SK-N-SH (cell line): ENCODE measurements at regions of chr5 and their contacts with region 1.

Region 1: DNA sequence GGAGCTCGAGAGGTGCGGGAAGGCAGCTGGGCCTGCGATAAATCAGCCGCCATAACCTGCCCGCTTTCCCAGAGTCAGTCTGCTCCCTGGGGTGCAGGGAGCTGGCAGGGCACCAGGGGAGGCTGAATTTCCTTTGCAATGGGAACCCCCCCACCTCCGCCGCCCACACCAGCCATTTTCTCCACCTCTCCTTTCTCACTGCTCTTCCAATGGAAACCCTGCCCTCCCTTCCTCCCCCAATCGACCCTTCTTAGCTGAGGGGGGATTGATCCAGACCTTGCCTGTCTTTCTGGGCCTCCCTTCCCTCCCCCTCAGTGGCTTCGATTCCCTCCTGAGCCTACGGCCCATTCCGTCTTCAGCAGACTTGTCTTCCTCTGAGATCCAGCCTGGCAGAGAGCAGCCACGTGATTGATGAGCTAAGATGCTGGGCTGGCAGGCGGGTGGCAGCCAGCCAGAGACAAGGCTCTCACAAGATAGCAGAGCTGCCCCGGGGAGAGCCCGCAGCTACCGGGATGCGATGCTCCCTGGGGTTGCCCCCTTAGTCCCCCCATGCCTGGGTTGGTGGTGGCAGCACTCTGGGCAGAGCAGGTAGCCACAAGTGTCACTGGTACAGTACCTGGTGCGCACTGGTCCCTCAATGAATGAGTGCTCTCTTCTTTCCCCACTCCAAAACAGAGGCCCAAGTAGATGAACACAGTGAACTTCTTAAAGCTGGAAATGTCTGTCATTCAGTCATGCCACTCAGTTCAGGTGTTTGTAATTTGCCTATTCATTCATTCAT is 53.7 kb upstream of the FABP6 start:
- DNase-seq: peak; percentile 66
- H3K4me3 ChIP-seq: no peak overlapping the region
- H3K27ac ChIP-seq: peak overlapping the region; percentile 11 to 68; a peak in 3 of 4 replicates
- H3K4me1 ChIP-seq: peaks cover 15 to 16% of the 10 kb centered on the region in 2 experiments
- H3K27me3 ChIP-seq: no peaks in the 10 kb centered on the region
- CTCF ChIP-seq: no peak
- EP300 ChIP-seq: peak in 1 of 2 experiments; percentile 19; a peak in 1 of 4 replicates
- RAD21 ChIP-seq: 0 out of 2 replicates have a peak, but pooled peaks have one; percentile 10

Region 2: GRCh38 chr5:160165137-160166068 is 10.2 kb before region 1 on chr5:
- CTCF ChIA-PET with region 1: interaction called, 6 read pairs
- POLR2A ChIA-PET with region 1: interaction called, 26 read pairs
- DNase-seq: peak; percentile 83
- H3K4me3 ChIP-seq: peak overlapping the region; percentile 30 to 47
- H3K27ac ChIP-seq: peak overlapping the region; percentile 99 to 100
- H3K4me1 ChIP-seq: peaks cover 33 to 44% of the 10 kb centered on the region in 2 experiments
- H3K27me3 ChIP-seq: no peaks in the 10 kb centered on the region
- CTCF ChIP-seq: no peak
- EP300 ChIP-seq: peak; percentile 83 to 94
- RAD21 ChIP-seq: peak; percentile 42

Region 3: GRCh38 chr5:160199410-160199911 is 23.8 kb after region 1 on chr5:
- CTCF ChIA-PET with region 1: interaction called, 11 read pairs
- POLR2A ChIA-PET with region 1: no interaction called
- DNase-seq: peak; percentile 97
- H3K4me3 ChIP-seq: peak overlapping the region; percentile 10 to 49; a peak in 3 of 4 replicates
- H3K27ac ChIP-seq: no peak overlapping the region; a peak in 1 of 4 replicates
- H3K4me1 ChIP-seq: peaks cover 0 to 17% of the 10 kb centered on the region in 2 experiments; a peak in 2 of 4 replicates
- H3K27me3 ChIP-seq: no peaks in the 10 kb centered on the region
- CTCF ChIP-seq: peak; percentile 97
- EP300 ChIP-seq: no peak
- RAD21 ChIP-seq: peak; percentile 81